Adrenal gland (tissue), 19 donors: ENCODE measurements at regions of chr13 and their contacts with region 1.

Region 1: DNA sequence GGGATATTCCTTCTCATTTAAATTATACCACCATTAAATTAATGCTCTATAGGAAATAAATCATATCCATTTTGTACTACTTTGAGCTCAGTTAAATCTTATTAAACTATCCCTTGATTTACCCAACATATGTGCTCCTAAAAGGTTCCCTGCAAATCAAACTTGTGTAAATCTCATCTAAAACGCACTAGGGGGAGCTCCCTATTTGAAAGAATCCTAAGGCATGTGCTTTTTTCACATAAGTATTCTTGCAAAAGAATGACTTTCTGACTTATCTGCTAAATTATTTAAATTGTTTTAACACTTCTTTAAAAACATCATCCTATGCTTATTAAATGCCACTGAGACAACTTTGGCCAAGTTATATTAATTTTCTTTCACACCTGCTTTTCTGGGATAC is 7.9 kb downstream of the INTS6 start:
- DNase-seq: no peak
- H3K4me3 ChIP-seq: no peak overlapping the region
- H3K27ac ChIP-seq: no peak overlapping the region
- H3K4me1 ChIP-seq: peaks cover 0 to 13% of the 10 kb centered on the region in 2 donors
- H3K27me3 ChIP-seq: no peaks in the 10 kb centered on the region
- CTCF ChIP-seq: peak in 4 of 6 experiments; percentile 16 to 34 (median 22)
- POLR2A ChIP-seq: no peak

Region 2: DNA sequence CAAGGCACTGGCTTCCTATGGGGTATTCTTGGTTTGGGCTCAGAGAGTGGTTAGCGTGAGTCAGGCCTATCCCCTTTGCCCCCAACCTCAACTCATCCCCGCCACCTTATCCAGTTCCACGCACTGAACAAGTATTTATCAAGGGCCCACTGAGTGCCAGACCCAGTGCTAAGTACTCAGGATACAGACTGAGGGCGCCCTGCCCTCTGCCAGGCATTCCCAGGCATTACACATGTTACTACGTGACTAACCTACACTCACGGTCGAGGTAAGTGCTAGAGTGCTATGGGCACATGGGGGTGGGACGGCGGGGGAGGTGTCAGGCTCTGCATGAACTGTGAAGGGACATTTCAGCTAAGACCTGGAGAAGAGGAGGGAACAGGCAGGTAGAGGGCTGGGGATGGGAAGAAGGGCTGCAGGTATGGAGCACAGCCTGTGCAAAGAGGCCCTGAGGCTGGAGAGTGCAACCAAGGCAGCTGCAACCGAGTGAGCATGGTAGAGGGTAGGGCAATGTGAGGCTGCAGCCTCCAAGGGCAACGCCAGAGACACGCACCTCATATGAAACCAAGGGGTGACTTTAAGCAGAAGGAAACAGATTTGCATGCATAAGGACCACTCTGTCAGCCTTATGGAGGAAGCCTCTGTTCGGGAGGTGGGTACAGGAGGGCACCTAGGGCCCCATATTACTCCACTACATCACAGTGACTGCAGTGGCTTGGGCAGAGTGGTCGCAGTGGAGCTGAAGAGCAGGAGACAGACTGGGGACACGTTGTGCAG is 336.5 kb after region 1 on chr13:
- intact Hi-C with region 1: loop called in 1 of 2 experiments (anchors 10 kb)
- DNase-seq: no peak
- H3K4me3 ChIP-seq: no peak overlapping the region
- H3K27ac ChIP-seq: no peak overlapping the region
- H3K4me1 ChIP-seq: peaks cover 0 to 20% of the 10 kb centered on the region in 2 donors
- H3K27me3 ChIP-seq: no peaks in the 10 kb centered on the region
- CTCF ChIP-seq: peak in 1 of 6 experiments; percentile 10
- POLR2A ChIP-seq: no peak